ENCODE measurements at regions of chr15 and their contacts with region 1.

Region 1: GRCh38 chr15:45402162-45402954 is 24.0 kb upstream of the GATM start:
- DNase-seq: peak; percentile 98
- ATAC-seq: peak; percentile 98
- H3K4me3 ChIP-seq: peak overlapping the region; percentile 57 to 82
- H3K27ac ChIP-seq: peak overlapping the region; percentile 38 to 78
- H3K4me1 ChIP-seq: no peaks in the 10 kb centered on the region
- H3K27me3 ChIP-seq: no peaks in the 10 kb centered on the region

Region 2: GRCh38 chr15:45166834-45167630 is 235.3 kb before region 1 on chr15:
- intact Hi-C with region 1: loop called (anchors 2 to 5 kb)
- DNase-seq: peak; percentile 94
- ATAC-seq: peak; percentile 81
- H3K4me3 ChIP-seq: peak overlapping the region; percentile 69 to 83
- H3K27ac ChIP-seq: peak overlapping the region; percentile 88 to 89
- H3K4me1 ChIP-seq: no peaks in the 10 kb centered on the region
- H3K27me3 ChIP-seq: no peaks in the 10 kb centered on the region

Region 3: DNA sequence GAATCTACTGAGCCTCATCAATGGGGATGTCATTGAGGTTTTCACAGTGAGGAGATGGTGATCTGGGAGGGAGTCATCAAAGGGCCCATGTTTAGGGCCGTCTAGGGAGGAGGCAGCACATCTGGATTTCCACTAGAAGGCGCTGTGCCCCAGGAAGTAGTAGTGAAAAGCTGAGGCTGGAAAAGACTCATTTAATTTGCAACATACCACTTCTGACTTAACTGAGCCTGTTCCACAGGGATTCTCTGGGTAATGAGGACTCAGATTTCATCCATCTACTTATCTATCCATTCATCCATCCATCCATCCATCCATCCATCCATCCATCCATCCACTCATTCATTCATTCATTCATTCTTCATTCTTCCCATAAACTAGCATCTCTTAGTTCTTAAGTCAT is 197.2 kb before region 1 on chr15:
- intact Hi-C with region 1: loop called (anchors 5 kb)
- DNase-seq: no peak
- ATAC-seq: no peak
- H3K4me3 ChIP-seq: no peak overlapping the region
- H3K27ac ChIP-seq: no peak overlapping the region
- H3K4me1 ChIP-seq: no peaks in the 10 kb centered on the region
- H3K27me3 ChIP-seq: no peaks in the 10 kb centered on the region

Region 4: DNA sequence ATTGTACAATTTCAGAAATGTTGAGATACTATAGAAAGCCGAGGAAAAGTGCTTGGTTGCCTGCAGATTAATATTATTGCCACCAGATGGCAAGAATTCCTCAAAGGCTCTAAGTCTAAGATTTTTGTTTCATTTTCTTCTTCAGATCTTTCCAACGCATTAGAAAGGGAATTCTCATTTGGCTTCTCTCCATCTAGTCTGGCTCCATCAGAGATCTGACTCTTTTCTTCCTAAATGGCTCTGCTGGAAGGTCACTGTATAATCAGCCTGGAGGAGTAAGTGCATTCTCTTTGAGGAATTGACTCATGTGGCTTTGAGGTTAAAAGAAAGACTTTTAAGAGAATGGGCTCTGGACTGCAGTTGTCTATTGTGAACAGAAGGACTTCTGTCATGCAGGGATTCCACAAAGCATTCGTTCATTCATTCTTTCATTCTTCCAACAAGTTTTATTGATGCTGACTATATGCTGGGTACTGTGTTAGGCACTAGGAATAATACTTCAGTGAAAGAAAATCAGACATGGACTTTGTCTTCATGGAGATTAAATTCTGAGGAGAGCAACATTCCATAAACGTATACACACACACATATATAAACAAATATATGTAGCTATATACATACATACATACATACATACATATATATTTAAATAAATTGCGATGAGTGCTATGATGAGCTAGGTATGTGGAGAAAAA is 95.0 kb before region 1 on chr15:
- intact Hi-C with region 1: loop called (anchors 1 to 2 kb)
- DNase-seq: no peak
- ATAC-seq: peak; percentile 69
- H3K4me3 ChIP-seq: peak overlapping the region in 1 of 2 donors; percentile 54
- H3K27ac ChIP-seq: no peak overlapping the region
- H3K4me1 ChIP-seq: no peaks in the 10 kb centered on the region
- H3K27me3 ChIP-seq: no peaks in the 10 kb centered on the region

Region 5: GRCh38 chr15:45333550-45333949 is 68.8 kb before region 1 on chr15:
- intact Hi-C with region 1: no loop called
- DNase-seq: peak in 1 of 2 donors; percentile 58
- ATAC-seq: no peak
- H3K4me3 ChIP-seq: no peak overlapping the region
- H3K27ac ChIP-seq: no peak overlapping the region
- H3K4me1 ChIP-seq: no peaks in the 10 kb centered on the region
- H3K27me3 ChIP-seq: no peaks in the 10 kb centered on the region

Region 6: DNA sequence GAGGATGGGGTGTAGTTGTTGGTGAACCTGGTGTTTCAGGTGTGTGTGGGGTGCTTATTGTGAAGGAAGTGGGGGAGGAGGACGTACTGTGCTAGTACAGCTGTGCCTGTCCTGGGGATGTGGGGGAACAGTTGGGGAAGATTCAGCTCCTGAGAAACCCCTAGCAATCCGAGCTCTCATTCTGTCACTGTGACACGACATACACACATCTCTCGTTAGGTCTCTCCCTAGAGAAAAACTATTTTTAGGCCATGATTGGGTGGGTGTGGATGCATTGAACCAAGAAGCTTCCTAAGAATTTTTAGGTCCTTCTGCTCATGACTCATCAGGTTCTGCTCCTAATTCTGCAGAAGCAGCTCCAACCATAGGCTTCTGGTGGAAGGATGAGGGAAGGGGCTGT is 65.9 kb after region 1 on chr15:
- intact Hi-C with region 1: no loop called
- DNase-seq: no peak
- ATAC-seq: no peak
- H3K4me3 ChIP-seq: no peak overlapping the region
- H3K27ac ChIP-seq: no peak overlapping the region
- H3K4me1 ChIP-seq: no peaks in the 10 kb centered on the region
- H3K27me3 ChIP-seq: no peaks in the 10 kb centered on the region

Region 7: GRCh38 chr15:45587095-45587860 is 184.9 kb after region 1 on chr15 and contains the start of gene BLOC1S6:
- intact Hi-C with region 1: loop called in 1 of 2 experiments (anchors 5 kb)
- DNase-seq: peak; percentile 95 to 96
- ATAC-seq: peak; percentile 96
- H3K4me3 ChIP-seq: peak within 1 kb of the TSS; percentile 67 to 92
- H3K27ac ChIP-seq: peak within 1 kb of the TSS; percentile 64 to 69
- H3K4me1 ChIP-seq: peaks cover 2 to 4% of the 10 kb centered on the region in 2 donors
- H3K27me3 ChIP-seq: no peaks in the 10 kb centered on the region
- total RNA-seq, gene BLOC1S6: 46.8 to 47.3 TPM

Measured in aorta (tissue), 5 donors.